Activated CD4-positive, alpha-beta memory T cell treated with anti-CD3 and anti-CD28 coated beads for 36 hours (primary cell): ENCODE measurements at regions of chr10 and their contacts with region 1.

Region 1: DNA sequence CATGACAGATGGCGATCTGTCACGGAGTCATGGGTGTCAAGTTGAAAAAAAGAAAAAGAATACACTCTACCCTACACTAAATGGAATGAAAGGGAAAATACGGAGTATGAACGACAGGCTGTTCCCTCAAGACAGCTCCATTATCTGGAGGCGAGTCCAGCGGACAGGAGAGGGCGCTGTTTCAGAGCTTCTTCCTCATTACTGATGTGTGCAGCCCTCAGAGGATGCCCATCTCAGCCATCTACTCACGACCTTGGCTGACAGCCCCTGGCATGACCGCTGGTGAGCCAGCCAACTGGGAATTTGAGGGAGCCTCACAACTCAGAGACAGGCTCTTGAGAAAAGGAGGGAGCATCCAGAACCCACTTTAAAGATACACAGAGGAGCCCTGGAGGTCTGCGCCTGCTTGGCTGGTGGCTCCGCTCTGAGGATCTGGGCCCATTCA is 49.6 kb upstream of the SMNDC1 start:
- DNase-seq: peak; percentile 93
- H3K4me3 Mint-ChIP-seq: peak overlapping the region; percentile 82
- H3K27ac Mint-ChIP-seq: peak overlapping the region; percentile 98
- H3K4me1 Mint-ChIP-seq: peaks cover 79% of the 10 kb centered on the region
- H3K27me3 Mint-ChIP-seq: no peaks in the 10 kb centered on the region

Region 2: DNA sequence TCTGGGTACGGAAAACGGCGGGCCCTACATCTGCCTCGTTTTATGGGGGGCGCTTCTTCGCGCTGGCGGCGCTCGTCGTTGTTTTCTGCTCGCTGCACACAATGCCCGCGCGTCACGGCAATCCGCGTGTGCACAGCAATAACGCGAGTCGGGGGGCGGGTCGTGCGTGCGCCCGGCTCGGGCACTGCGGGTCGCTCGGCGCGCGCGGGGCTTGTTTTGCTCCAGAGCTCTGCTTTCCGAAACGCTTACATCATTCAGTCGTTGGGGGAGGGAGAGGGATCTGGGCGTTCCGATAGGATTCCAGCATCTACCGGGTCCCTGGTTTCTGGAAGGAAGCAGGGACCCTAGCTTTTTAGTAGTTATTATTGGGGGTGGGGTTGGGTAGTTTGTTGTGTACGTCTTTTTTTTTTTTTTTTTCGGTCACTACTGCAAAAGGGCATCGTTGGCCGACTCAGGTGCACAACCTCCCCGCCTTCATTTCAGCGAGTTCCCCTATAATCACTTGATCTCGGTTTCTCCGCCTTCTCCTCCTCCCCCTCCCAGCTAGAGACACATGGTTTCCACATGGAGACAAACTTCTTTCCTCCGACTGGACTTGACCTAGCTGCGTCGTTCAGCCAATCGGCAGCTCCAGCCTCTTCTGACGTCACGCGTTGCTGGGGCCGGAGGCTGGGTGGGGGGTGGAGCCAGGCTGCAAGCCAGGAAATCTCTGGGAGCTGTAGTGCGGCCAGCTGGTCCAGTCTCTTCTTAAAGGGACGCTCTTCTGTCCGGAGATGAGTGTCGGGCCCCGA is 143.5 kb before region 1 on chr10:
- CTCF ChIA-PET with region 1: no interaction called
- POLR2A ChIA-PET with region 1: no interaction called
- intact Hi-C with region 1: loop called (anchors 5 kb)
- DNase-seq: peak; percentile 96
- H3K4me3 Mint-ChIP-seq: peak overlapping the region; percentile 96
- H3K27ac Mint-ChIP-seq: peak overlapping the region; percentile 91
- H3K4me1 Mint-ChIP-seq: peaks cover 54% of the 10 kb centered on the region
- H3K27me3 Mint-ChIP-seq: peaks cover 1% of the 10 kb centered on the region

Region 3: GRCh38 chr10:110326351-110327032 is 27.9 kb before region 1 on chr10:
- CTCF ChIA-PET with region 1: interaction called, 30 read pairs
- POLR2A ChIA-PET with region 1: interaction called, 3 read pairs
- intact Hi-C with region 1: loop called (anchors 1 kb)
- DNase-seq: no peak
- H3K4me3 Mint-ChIP-seq: no peak overlapping the region
- H3K27ac Mint-ChIP-seq: peak overlapping the region; percentile 64
- H3K4me1 Mint-ChIP-seq: peaks cover 44% of the 10 kb centered on the region
- H3K27me3 Mint-ChIP-seq: peaks cover 5% of the 10 kb centered on the region

Region 4: GRCh38 chr10:110414563-110415309 is 60.4 kb after region 1 on chr10:
- CTCF ChIA-PET with region 1: interaction called, 52 read pairs
- POLR2A ChIA-PET with region 1: interaction called, 27 read pairs
- intact Hi-C with region 1: loop called (anchors 1 kb)
- DNase-seq: peak; percentile 97
- H3K4me3 Mint-ChIP-seq: peak overlapping the region; percentile 37
- H3K27ac Mint-ChIP-seq: peak overlapping the region; percentile 91
- H3K4me1 Mint-ChIP-seq: peaks cover 87% of the 10 kb centered on the region
- H3K27me3 Mint-ChIP-seq: no peaks in the 10 kb centered on the region

Region 5: DNA sequence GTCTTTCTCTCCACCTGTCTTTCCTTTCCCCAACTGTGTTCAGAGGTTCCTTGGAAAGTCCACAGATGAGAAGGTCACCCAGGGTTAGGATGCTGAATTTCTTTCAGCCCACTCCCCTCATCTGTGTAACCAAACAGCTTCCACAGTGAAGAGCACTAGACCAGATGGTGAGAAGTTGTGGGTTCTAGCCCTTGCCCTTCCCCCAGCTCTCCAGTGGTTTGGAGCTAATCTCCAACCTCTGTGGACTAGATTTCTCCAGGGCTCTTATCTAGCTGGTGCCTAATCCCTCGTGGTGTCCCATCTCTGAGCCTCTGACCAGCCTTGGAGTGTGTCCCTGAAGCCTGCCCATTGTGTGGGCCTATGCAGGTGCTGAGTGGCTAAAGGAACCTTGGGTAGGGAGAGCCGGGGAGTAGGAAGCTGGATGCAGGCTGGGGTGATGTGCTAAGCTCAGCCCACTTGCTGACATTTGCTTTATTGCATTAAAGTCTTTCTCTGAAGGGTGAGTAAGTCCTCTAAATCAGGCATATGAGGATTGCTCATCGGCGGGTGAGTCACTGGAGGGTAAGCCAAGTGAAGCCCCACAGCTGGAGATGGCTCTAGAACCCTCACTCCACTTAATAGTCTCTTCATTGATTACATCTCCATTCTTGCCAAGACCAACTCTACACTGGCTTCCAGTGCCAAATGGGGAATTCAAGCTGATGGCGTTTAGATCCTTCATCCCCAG is 158.3 kb after region 1 on chr10:
- CTCF ChIA-PET with region 1: interaction called, 7 read pairs
- POLR2A ChIA-PET with region 1: interaction called, 10 read pairs
- intact Hi-C with region 1: no loop called
- DNase-seq: peak; percentile 82
- H3K4me3 Mint-ChIP-seq: no peak overlapping the region
- H3K27ac Mint-ChIP-seq: peak overlapping the region; percentile 85
- H3K4me1 Mint-ChIP-seq: peaks cover 60% of the 10 kb centered on the region
- H3K27me3 Mint-ChIP-seq: no peaks in the 10 kb centered on the region

Region 6: GRCh38 chr10:110567201-110568054 is 213.1 kb after region 1 on chr10 and contains the start of gene SMC3:
- CTCF ChIA-PET with region 1: interaction called, 6 read pairs
- POLR2A ChIA-PET with region 1: no interaction called
- intact Hi-C with region 1: loop called (anchors 1 kb)
- DNase-seq: peak; percentile 94
- H3K4me3 Mint-ChIP-seq: peak within 1 kb of the TSS; percentile 93
- H3K27ac Mint-ChIP-seq: peak within 1 kb of the TSS; percentile 97
- H3K4me1 Mint-ChIP-seq: peaks cover 43% of the 10 kb centered on the region
- H3K27me3 Mint-ChIP-seq: peaks cover 10% of the 10 kb centered on the region
- total RNA-seq, gene SMC3: 89.5 to 92.2 TPM